Ascending aorta (tissue), 2 donors: ENCODE measurements at regions of chr14 and their contacts with region 1.

Region 1: GRCh38 chr14:71320107-71320733 is 413.0 kb downstream of the PCNX1 start:
- DNase-seq: peak; percentile 91 to 98
- H3K4me3 ChIP-seq: peak within 1 kb of the TSS; percentile 87 to 95
- H3K27ac ChIP-seq: peak within 1 kb of the TSS; percentile 94 to 99
- H3K4me1 ChIP-seq: peaks cover 0 to 8% of the 10 kb centered on the region in 2 donors
- H3K27me3 ChIP-seq: no peaks in the 10 kb centered on the region
- CTCF ChIP-seq: no peak

Region 2: GRCh38 chr14:70514168-70515069 is 805.8 kb before region 1 on chr14:
- intact Hi-C with region 1: no loop called
- DNase-seq: no peak
- H3K4me3 ChIP-seq: no peak overlapping the region
- H3K27ac ChIP-seq: no peak overlapping the region
- H3K4me1 ChIP-seq: no peaks in the 10 kb centered on the region
- H3K27me3 ChIP-seq: no peaks in the 10 kb centered on the region
- CTCF ChIP-seq: no peak

Region 3: DNA sequence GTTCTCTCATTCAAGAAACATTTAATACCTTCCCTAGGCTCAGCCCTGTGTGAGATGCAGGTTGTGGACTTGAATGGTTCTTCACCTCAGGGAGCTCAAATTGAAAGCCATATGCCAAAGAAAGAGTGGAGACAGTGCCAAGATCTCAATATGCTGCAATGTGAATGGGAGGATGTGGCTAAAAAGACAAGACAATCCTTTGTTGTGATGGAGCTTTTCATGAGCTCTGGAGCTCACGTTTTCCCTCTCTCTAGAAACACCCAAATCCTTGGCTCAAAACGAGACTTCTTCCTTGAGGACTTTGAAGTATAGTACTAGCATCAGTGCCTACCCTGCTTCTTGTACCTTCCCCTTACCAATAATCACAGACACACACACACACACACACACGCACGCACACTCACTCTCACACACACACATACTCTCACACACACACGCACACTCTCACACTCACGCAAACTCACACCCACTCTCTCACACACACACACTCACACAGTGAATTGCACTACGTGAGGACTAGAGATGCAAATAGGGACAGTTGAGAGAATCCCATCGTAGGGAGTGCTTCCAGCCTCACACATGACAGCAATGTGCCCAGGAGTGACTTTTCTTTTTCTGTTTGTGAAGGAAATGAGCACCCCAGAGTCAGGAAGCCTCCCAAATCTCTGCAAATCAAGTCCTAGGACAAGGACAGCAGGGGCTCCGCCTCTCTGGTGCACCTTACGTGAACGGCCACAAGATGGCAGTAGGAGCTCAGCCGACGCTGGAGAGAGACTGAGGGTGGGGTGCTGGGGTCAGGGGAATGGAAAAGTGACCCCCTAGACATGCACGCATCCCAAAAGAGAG is 181.5 kb before region 1 on chr14:
- intact Hi-C with region 1: loop called (anchors 2 kb)
- DNase-seq: no peak
- H3K4me3 ChIP-seq: no peak overlapping the region
- H3K27ac ChIP-seq: no peak overlapping the region
- H3K4me1 ChIP-seq: no peaks in the 10 kb centered on the region
- H3K27me3 ChIP-seq: no peaks in the 10 kb centered on the region
- CTCF ChIP-seq: peak; percentile 82 to 97 (median 95)

Region 4: GRCh38 chr14:71193663-71194062 is 126.6 kb before region 1 on chr14:
- intact Hi-C with region 1: no loop called
- DNase-seq: no peak
- H3K4me3 ChIP-seq: no peak overlapping the region
- H3K27ac ChIP-seq: no peak overlapping the region
- H3K4me1 ChIP-seq: no peaks in the 10 kb centered on the region
- H3K27me3 ChIP-seq: no peaks in the 10 kb centered on the region
- CTCF ChIP-seq: no peak

Region 5: DNA sequence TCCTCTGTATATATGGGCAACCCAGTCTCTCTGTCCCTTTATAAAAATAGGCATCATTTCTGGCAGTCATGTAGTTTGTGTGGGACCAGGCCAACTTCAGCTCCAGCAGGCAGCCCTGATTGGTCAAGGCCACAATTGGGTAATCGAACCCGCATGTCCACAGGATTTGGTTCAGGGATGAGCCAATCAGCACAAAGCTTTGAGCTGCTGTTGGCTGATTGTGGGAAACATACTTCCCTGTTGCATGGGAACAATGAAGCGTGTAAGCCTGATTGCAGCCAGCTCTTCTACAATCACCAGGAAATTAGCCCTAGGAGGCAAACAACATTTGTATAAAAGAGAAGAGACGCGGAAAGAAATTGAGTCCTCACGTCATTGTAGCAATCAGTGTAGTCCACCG is 84.3 kb before region 1 on chr14:
- intact Hi-C with region 1: no loop called
- DNase-seq: peak; percentile 46 to 81
- H3K4me3 ChIP-seq: no peak overlapping the region
- H3K27ac ChIP-seq: no peak overlapping the region
- H3K4me1 ChIP-seq: no peaks in the 10 kb centered on the region
- H3K27me3 ChIP-seq: no peaks in the 10 kb centered on the region
- CTCF ChIP-seq: no peak

Region 6: DNA sequence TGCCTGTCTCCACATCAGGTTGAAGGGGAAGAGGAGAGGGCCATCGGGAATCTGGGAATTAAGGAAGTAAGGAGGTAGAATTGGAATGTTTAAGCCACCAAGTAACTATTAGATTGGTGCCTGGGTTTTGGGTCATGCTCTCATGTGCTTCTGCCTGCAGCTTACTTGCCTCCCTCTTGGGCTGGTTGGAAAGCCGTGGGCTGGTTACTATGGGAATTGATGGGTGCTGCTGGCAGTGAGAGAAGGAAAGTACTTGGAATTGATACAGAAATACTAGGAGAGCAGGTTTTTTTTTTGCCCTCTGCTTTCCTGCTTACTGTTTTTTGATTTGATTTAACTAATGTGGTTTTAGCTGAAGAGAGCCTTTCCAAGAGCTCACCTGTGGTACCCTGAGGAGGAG is 118.5 kb after region 1 on chr14:
- intact Hi-C with region 1: loop called (anchors 5 kb)
- DNase-seq: no peak
- H3K4me3 ChIP-seq: no peak overlapping the region
- H3K27ac ChIP-seq: peak overlapping the region; percentile 73 to 80
- H3K4me1 ChIP-seq: peaks cover 7 to 28% of the 10 kb centered on the region in 2 donors
- H3K27me3 ChIP-seq: no peaks in the 10 kb centered on the region
- CTCF ChIP-seq: no peak

Region 7: DNA sequence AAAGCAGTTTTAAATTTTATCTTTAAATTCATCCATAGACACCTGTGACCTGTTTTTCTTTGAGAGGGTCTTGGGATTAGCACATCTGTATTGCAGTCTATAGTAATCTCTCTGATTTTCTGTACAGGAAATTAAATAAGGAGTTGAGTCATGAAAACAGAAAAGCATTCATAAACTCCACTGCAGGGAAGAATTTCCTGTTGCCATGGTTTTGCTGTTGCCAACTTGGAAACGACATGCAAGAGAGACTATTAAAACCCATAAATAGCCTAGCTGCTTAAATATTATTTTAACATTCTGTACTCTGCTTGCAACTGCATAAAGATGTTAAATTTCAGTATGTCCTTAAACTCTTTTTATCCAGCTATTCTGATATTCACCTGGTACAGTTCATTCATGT is 331.0 kb after region 1 on chr14:
- intact Hi-C with region 1: loop called (anchors 1 kb)
- DNase-seq: peak in 1 of 2 donors; percentile 80
- H3K4me3 ChIP-seq: no peak overlapping the region
- H3K27ac ChIP-seq: peak overlapping the region; percentile 68 to 72
- H3K4me1 ChIP-seq: peaks cover 0 to 23% of the 10 kb centered on the region in 2 donors
- H3K27me3 ChIP-seq: no peaks in the 10 kb centered on the region
- CTCF ChIP-seq: no peak

Region 8: DNA sequence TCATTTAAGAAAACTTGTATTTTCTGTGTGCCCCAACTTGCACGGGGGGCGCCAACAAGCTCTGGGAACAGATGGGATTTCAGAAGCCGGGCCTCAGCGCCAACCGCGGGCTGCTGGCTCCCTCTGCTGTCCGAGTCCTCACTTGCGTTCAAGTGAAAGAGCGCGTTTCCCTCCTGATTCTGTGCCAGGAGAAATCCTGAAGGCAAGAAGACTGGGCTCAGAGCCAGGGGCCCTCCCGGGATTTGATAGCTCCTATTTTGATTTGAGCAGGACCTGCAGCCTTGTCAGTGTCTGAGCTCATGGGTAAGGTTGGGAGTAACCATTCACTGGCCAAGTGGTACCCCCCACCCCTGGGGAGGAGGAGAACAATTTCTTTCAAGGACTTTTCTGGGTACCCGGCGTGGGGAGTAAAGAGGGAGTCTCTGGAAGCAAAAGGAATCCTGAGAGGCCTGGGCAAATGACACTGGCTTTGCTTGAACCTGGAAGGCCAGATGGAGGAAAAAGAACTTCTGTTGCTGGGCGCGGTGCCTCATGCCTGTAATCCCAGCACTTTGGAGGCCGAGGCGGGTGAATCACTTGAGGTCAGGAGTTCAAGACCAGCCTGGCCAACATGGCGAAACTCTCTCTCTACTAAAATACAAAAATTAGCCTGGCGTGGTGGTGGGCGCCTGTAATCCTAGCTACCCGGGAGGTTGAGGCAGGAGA is 433.1 kb after region 1 on chr14:
- intact Hi-C with region 1: loop called (anchors 2 kb)
- DNase-seq: peak; percentile 29 to 92
- H3K4me3 ChIP-seq: peak overlapping the region in 1 of 2 donors; percentile 44
- H3K27ac ChIP-seq: no peak overlapping the region
- H3K4me1 ChIP-seq: peaks cover 0 to 3% of the 10 kb centered on the region in 2 donors
- H3K27me3 ChIP-seq: no peaks in the 10 kb centered on the region
- CTCF ChIP-seq: peak; percentile 89 to 96 (median 92)